Panc1 (cell line): ENCODE measurements at regions of chr5 and their contacts with region 1.

Region 1: DNA sequence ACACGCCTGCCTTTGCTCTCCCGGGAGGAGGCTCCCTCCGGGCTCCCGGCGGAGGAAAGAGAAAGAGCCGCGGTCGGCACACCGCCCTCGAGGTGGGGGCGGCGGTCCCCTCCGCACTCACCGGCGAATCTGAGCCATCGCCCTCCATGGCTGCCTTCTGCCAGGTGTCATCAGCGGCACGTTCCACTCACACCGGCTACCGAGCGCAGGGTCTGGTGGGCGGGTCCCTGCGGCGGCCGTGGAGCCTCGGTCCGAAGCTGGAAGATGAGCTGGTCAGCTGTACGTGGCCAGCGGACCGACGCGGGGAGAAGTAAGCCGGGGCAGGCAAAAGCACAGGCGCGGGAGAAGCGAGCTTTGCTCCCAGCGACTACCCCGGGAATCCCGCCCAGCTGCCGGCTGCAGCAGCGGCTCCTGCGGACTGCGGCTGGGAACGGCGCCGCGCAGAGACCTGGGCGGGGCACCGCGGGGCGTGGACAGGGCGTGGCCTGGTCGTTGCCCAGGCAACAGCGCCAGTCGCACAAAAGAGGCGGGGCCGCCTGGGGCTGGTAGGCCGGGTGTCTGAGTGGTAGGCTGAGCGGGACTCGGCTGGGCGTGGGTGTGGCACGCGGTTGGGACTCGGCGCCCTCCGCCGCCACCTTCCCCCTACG is at the start of gene TRIM36:
- DNase-seq: peak; percentile 53
- ATAC-seq: peak; percentile 99
- H3K4me3 ChIP-seq: peak within 1 kb of the TSS; percentile 73 to 74
- H3K27ac ChIP-seq: no peak within 1 kb of the TSS
- H3K4me1 ChIP-seq: no peaks in the 10 kb centered on the region; the same call in 1 of the 2 replicates
- H3K27me3 ChIP-seq: peaks cover 28% of the 10 kb centered on the region
- CTCF ChIP-seq: peak; percentile 43
- total RNA-seq, gene TRIM36: 1.6 TPM

Region 2: DNA sequence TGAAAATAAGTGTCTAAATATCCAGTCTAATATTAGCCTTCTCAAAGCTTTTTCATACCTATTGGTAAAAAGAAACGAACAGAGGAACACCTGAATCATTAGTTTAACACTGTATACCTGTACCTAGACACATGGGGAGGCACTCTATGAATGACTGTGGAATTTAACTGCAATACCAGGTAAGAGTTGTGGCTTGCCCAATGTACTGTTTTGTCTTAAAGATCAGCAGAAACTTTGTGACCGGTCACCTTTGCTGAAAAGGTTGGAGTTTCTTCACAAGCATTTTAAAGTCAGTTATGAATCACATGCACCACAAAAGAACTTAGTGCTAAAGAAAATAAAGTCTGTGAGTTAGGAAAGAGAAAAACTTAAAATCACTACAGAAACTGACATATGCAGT is 90.6 kb after region 1 on chr5:
- CTCF ChIA-PET with region 1: no interaction called
- POLR2A ChIA-PET with region 1: interaction called, 13 read pairs
- in situ Hi-C with region 1: no loop called
- intact Hi-C with region 1: no loop called
- DNase-seq: no peak
- ATAC-seq: no peak
- H3K4me3 ChIP-seq: no peak overlapping the region
- H3K27ac ChIP-seq: no peak overlapping the region
- H3K4me1 ChIP-seq: peaks cover 20% of the 10 kb centered on the region
- H3K27me3 ChIP-seq: no peaks in the 10 kb centered on the region
- CTCF ChIP-seq: no peak